Right cardiac atrium (tissue), 5 donors: ENCODE measurements at regions of chr10 and their contacts with region 1.

Region 1: GRCh38 chr10:120926611-120927010 is 75.4 kb downstream of the WDR11 start:
- DNase-seq: no peak
- ATAC-seq: peak in 1 of 2 donors; percentile 27
- H3K4me3 ChIP-seq: no peak overlapping the region
- H3K27ac ChIP-seq: no peak overlapping the region
- H3K4me1 ChIP-seq: no peaks in the 10 kb centered on the region
- H3K27me3 ChIP-seq: no peaks in the 10 kb centered on the region

Region 2: GRCh38 chr10:121880895-121881294 is 954.3 kb after region 1 on chr10:
- intact Hi-C with region 1: loop called in 1 of 4 experiments (anchors 5 kb)
- DNase-seq: no peak
- ATAC-seq: no peak
- H3K4me3 ChIP-seq: no peak overlapping the region
- H3K27ac ChIP-seq: no peak overlapping the region
- H3K4me1 ChIP-seq: no peaks in the 10 kb centered on the region
- H3K27me3 ChIP-seq: no peaks in the 10 kb centered on the region